ENCODE measurements at regions of chr9 and their contacts with region 1.

Region 1: GRCh38 chr9:135085830-135086546 is 1.5 kb upstream of the OLFM1 start:
- DNase-seq: peak; percentile 90
- H3K27ac ChIP-seq: no peak overlapping the region
- CTCF ChIP-seq: peak; percentile 99

Region 2: DNA sequence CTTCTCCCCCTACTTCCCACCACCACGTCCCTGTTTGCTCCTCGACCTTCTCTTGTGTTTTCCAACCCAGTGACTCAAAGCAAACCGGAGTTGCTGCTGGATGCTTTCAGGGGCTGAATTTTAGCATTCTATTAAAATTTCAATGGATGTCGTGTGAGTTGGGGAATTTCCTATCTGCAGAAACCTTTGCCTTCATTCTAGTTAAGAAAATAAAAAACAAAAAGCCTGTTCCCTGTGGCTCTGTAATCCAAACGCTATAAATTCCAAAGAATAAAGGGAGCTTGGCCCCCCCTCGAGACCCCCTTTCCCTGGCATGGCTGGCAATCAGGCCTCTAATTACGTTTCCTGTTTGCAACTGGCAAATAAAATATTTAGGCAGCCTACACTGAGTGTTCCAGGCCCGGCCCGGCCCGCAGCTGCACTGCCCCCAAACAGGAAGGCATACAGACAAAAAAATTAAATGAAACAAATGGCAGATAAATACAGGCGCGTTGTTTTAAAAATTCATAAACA is 254.2 kb after region 1 on chr9:
- CTCF ChIA-PET with region 1: interaction called, 13 read pairs
- POLR2A ChIA-PET with region 1: no interaction called
- DNase-seq: no peak
- H3K27ac ChIP-seq: no peak overlapping the region
- CTCF ChIP-seq: no peak

Region 3: DNA sequence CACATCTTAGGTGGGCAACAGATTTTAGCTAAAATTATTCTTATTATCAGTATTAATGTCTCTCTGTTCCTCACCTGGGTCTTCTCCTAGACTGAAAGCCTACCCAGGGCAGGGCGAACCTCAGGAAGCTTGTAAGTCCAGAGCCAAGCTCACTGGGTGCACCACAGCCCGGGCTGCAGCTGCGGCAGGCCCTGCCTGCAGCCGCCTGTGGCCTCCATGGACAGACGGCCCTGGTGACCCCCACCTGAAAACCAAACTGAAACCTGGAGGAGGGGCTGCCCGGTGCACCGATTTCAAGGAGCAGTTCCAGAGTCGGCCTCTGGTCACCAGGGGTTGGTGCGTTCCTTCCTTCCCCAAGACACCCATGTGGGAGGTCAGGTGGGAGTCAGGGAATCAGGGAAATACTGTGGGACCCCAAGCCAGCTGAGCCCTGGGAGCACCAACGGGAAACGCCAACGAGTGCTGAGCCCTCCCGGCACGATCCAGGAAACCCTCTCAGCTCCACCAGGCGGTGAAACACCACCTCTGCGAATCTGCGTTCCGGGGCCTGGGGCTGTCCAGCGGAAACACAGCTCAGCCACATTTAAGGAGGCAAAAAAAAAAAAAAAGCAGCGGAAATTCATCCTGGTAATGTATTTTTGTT is 325.0 kb after region 1 on chr9:
- CTCF ChIA-PET with region 1: interaction called, 53 read pairs
- POLR2A ChIA-PET with region 1: no interaction called
- DNase-seq: no peak
- H3K27ac ChIP-seq: no peak overlapping the region
- CTCF ChIP-seq: no peak

Measured in RWPE1 (cell line).